AG04450 (cell line): ENCODE measurements at regions of chr1 and their contacts with region 1.

Region 1: GRCh38 chr1:59699227-59699847 is 115.4 kb upstream of the HOOK1 start:
- DNase-seq: no peak
- H3K4me3 ChIP-seq: no peak overlapping the region
- H3K27ac ChIP-seq: no peak overlapping the region
- H3K27me3 ChIP-seq: no peaks in the 10 kb centered on the region
- CTCF ChIP-seq: peak; percentile 97

Region 2: GRCh38 chr1:58739856-58740466 is 959.4 kb before region 1 on chr1:
- CTCF ChIA-PET with region 1: interaction called, 15 read pairs
- POLR2A ChIA-PET with region 1: no interaction called
- DNase-seq: no peak
- H3K4me3 ChIP-seq: no peak overlapping the region
- H3K27ac ChIP-seq: no peak overlapping the region
- H3K27me3 ChIP-seq: no peaks in the 10 kb centered on the region
- CTCF ChIP-seq: peak; percentile 78

Region 3: DNA sequence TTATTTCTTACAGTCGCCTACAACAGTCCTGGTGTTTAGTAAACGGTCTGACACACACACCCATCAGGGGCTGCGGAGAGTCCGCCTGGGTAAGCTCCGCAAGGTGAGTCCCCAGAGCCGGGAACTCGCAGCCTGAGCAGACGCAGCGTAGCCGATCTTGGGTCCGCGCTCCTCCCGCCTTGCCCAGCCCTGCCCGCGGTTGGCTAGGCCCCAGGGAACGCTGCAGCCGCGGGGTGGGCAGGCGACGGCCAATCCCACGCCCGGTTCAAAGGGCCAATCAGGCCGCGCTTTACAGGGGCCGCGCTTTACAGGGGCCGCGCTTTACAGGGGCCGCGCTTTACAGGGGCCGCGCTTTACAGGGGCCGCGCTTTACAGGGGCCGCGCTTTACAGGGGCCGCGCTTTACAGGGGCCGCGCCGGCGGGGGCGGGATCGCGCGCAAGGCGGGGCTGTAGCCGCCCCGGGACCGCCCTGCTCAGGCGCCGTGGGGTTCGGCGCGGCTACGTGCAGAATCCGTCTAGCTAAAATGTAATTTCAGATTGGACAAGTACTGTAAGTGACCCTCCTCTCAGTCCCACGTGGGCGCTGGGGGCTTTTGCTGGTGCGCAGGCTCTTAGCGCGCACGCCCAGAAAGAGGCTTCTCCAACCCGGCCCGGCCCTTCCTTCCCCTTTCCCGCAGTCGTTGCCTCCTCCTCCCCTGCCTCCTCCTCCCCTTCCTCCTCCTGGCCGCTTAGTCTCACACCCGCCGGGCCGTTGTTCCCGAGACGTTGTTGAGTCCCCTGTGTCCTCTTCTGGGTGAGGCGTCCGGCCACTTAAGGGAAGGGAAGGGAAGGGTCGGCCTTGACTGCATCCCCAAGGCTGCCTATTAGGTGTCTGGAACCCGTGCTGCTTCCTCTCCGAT is 402.7 kb before region 1 on chr1 and contains the start of gene FGGY:
- CTCF ChIA-PET with region 1: interaction called, 10 read pairs
- POLR2A ChIA-PET with region 1: interaction called, 5 read pairs
- DNase-seq: peak; percentile 98
- H3K4me3 ChIP-seq: peak within 1 kb of the TSS; percentile 69
- H3K27ac ChIP-seq: peak within 1 kb of the TSS; percentile 84
- H3K27me3 ChIP-seq: no peaks in the 10 kb centered on the region
- CTCF ChIP-seq: no peak
- polyA plus RNA-seq, gene FGGY: 11.8 and 12.6 TPM in 2 replicates

Region 4: DNA sequence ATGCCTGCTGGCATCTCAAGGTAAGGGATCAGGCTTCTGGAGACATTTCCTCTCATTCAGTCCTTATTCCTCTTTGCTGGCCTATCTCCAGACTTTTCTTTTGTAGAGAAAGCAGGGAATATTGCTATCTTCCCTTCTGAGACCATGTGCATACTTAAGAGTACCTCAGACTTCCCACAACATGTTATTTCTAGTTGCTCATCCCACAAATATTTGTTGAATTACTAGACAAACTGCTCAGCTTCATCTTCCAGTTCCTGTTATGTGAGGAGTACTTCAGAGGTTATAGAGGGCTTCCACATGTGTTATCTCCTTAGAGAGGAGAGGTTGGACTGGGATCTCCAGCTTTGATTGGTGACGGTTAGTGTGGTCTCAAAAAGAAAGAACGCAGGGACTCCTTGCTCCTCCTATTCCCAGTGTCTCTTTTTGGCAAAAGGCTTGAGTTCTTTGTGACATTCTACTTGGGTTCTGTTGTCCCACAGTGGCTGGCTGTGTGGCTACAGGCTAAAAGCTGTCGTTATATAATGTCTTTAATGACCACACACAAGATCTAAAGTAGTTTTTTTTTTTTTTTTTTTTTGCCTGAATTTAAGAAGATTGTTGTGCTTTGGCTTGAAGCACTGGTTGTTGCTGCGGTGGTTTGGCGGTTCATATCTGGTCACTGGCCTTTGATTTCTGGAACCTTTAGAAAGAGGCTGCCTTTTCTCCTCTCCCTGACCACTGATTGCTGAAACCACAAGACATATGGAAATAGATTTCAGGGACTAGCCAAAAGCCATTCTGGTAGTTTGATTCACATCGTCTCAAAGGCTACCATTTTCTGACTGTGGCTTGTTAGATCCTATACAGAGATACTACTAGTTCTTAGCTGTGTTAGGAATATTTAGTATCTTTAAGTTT is 323.8 kb before region 1 on chr1:
- CTCF ChIA-PET with region 1: interaction called, 5 read pairs
- POLR2A ChIA-PET with region 1: interaction called, 11 read pairs
- DNase-seq: peak; percentile 94
- H3K4me3 ChIP-seq: no peak overlapping the region
- H3K27ac ChIP-seq: peak overlapping the region; percentile 85
- H3K27me3 ChIP-seq: no peaks in the 10 kb centered on the region
- CTCF ChIP-seq: no peak

Region 5: DNA sequence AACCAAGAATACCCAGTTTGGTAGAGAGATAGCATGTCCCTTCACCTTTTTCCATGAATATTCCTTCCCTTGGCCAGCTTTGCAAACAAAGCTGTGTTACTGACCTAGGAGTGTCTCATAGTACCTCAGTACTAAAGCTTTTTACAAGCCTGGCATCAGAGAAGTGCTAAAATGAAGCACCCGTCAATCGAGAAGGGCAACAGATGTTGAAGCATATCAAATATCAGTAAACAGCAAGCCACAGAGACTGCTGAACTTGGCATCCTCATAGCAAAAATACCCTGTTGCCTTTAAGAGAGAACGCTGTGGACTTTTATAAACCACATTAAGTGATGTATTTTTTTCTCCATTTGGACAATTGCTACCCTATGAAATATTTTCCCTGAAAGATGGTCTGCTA is 13.2 kb before region 1 on chr1:
- CTCF ChIA-PET with region 1: interaction called, 15 read pairs
- POLR2A ChIA-PET with region 1: no interaction called
- DNase-seq: no peak
- H3K4me3 ChIP-seq: no peak overlapping the region
- H3K27ac ChIP-seq: no peak overlapping the region
- H3K27me3 ChIP-seq: no peaks in the 10 kb centered on the region
- CTCF ChIP-seq: no peak